Activated naive CD4-positive, alpha-beta T cell treated with anti-CD3 and anti-CD28 coated beads, Interleukin-2, amount 10 ng/mL, durations not matched to agents 7 days and 5 days (primary cell): ENCODE measurements at regions of chr1 and their contacts with region 1.

Region 1: DNA sequence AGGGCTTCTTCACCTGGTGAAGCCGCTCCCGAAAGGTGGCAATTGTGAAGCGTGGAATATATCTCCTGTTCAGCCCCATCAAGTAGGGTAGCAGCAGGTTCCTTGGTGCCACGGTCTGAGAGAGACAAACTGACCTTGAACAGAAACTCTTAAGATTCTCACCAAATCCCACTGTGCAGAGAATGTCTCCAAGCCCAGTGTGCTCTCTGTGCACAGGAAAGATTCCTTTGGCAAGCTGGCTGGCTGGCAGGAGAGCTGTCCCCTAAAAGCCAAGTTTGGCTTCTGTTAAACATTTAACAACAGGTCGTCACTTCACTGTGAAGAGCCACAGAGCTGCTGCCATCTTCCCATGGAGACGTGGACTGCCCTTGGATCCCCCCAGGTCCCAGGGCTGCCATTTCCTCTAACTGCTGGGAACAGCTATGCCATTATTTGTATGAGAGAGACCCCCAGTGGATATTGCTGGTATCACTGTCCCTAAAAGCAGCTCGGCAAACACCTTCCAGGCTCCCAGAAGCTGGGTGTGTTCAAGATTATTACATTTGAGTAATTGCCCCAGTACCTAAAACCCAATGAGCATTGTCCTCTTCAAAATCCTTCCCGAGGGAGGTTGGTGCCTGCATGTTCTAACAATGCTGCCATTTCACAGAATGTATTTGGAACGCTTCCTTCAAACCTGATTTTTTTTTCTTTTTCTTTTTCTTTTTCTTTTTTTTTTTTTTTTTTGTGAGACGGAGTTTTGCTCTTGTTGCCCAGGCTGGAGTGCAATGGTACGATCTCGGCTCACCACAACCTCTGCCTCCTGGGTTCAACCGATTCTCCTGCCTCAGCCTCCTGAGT is 71.8 kb downstream of the CD58 start:
- DNase-seq: peak; percentile 65
- H3K4me3 Mint-ChIP-seq: no peak overlapping the region
- H3K27ac Mint-ChIP-seq: no peak overlapping the region
- H3K4me1 Mint-ChIP-seq: peaks cover 59% of the 10 kb centered on the region
- H3K27me3 Mint-ChIP-seq: no peaks in the 10 kb centered on the region

Region 2: GRCh38 chr1:116151739-116152576 is 347.1 kb before region 1 on chr1:
- CTCF ChIA-PET with region 1: interaction called, 10 read pairs
- DNase-seq: peak; percentile 76
- H3K4me3 Mint-ChIP-seq: peak overlapping the region; percentile 35
- H3K27ac Mint-ChIP-seq: peak overlapping the region; percentile 50
- H3K4me1 Mint-ChIP-seq: peaks cover 19% of the 10 kb centered on the region
- H3K27me3 Mint-ChIP-seq: peaks cover 21% of the 10 kb centered on the region